ENCODE measurements at regions of chr1 and their contacts with region 1.

Region 1: GRCh38 chr1:58783993-58784757 is at the start of gene JUN:
- DNase-seq: peak; percentile 99 to 100
- H3K4me3 ChIP-seq: peak within 1 kb of the TSS; percentile 95 to 97
- H3K27ac ChIP-seq: peak within 1 kb of the TSS; percentile 99
- H3K4me1 ChIP-seq: peaks cover 0 to 5% of the 10 kb centered on the region in 2 donors
- H3K27me3 ChIP-seq: no peaks in the 10 kb centered on the region
- CTCF ChIP-seq: peak in 1 of 3 experiments; percentile 17
- total RNA-seq, gene JUN: 1,004 TPM

Region 2: GRCh38 chr1:58883037-58883887 is 99.1 kb after region 1 on chr1:
- intact Hi-C with region 1: loop called (anchors 5 kb)
- DNase-seq: peak; percentile 63 to 91
- H3K4me3 ChIP-seq: no peak overlapping the region
- H3K27ac ChIP-seq: peak overlapping the region; percentile 62 to 77
- H3K4me1 ChIP-seq: peaks cover 13 to 35% of the 10 kb centered on the region in 2 donors
- H3K27me3 ChIP-seq: no peaks in the 10 kb centered on the region
- CTCF ChIP-seq: no peak

Region 3: DNA sequence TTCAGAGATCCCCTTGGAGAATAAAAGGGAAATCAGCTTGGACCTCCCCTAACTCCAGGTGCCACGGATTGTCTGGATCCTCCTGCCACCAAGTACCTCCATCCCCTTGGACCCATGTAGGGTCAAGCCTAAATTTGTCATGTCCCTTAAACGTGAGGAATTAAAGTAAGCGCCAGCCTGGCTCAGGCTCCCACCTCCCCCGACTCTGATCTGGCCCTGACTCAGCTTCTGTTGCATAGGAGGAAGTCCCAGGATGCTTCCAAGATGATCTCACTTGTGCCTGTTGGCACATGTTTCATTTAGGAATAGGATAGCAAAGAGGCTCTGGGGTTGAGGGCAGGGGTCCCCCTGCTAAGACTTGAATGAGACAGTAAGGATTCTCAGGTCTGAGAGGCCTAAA is 231.5 kb after region 1 on chr1:
- intact Hi-C with region 1: loop called (anchors 5 kb)
- DNase-seq: no peak
- H3K4me3 ChIP-seq: no peak overlapping the region
- H3K27ac ChIP-seq: no peak overlapping the region
- H3K4me1 ChIP-seq: peaks cover 0 to 27% of the 10 kb centered on the region in 2 donors
- H3K27me3 ChIP-seq: no peaks in the 10 kb centered on the region
- CTCF ChIP-seq: no peak

Region 4: GRCh38 chr1:59150577-59151391 is 366.6 kb after region 1 on chr1:
- intact Hi-C with region 1: loop called (anchors 2 kb)
- DNase-seq: peak; percentile 43 to 93
- H3K4me3 ChIP-seq: peak overlapping the region; percentile 41 to 52
- H3K27ac ChIP-seq: peak overlapping the region; percentile 73 to 81
- H3K4me1 ChIP-seq: peaks cover 0 to 30% of the 10 kb centered on the region in 2 donors
- H3K27me3 ChIP-seq: no peaks in the 10 kb centered on the region
- CTCF ChIP-seq: no peak

Region 5: GRCh38 chr1:59393211-59394180 is 609.3 kb after region 1 on chr1:
- intact Hi-C with region 1: loop called (anchors 1 kb)
- DNase-seq: peak; percentile 58 to 94
- H3K4me3 ChIP-seq: no peak overlapping the region
- H3K27ac ChIP-seq: peak overlapping the region; percentile 91 to 93
- H3K4me1 ChIP-seq: peaks cover 7 to 30% of the 10 kb centered on the region in 2 donors
- H3K27me3 ChIP-seq: no peaks in the 10 kb centered on the region
- CTCF ChIP-seq: no peak

Region 6: DNA sequence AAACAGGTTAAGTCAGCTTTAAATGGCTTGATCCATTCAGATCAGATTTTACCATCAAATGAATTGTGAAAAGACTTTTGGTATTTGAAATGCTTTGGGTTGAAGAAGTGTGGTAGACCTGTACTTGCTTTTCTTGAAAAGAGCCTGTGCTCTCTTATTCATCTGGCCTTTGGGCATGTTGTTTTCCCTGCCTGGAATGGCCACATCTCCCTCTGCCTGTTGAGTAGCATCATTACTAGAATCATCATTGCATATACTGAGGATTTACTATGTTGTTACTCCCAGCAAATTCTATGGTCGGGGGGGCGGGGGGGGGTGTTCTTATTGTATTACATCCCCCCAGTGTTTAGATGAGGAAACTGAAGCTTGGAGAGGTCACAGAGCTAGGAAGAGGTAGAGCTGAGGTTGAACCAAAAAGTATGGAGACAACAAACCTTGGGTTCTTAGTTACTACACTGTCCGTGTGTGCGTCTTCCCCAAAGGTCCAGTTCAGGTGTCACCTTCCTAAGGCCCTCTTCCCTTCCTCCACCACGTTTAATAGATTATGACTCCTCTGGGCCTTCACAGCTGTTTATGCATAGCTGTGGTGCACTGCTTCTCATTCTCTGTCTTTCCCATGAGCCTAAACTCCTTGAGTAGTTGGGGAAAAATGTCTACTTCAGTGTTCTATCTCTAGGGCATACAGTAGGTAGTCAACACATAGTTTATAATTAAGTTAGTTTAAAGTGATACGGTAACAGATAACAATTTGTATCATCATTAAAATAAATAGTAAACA is 784.2 kb after region 1 on chr1:
- intact Hi-C with region 1: loop called (anchors 5 kb)
- DNase-seq: no peak
- H3K4me3 ChIP-seq: no peak overlapping the region
- H3K27ac ChIP-seq: no peak overlapping the region
- H3K4me1 ChIP-seq: no peaks in the 10 kb centered on the region
- H3K27me3 ChIP-seq: no peaks in the 10 kb centered on the region
- CTCF ChIP-seq: peak in 2 of 3 experiments; percentile 14 to 29